ENCODE measurements at regions of chr12 and their contacts with region 1.

Region 1: GRCh38 chr12:124898200-124898922 is 16.1 kb downstream of the UBC start:
- DNase-seq: peak in 9 of 10 donors; percentile 52 to 89 (median 76)
- H3K4me3 ChIP-seq: peak overlapping the region; percentile 7 to 65 (median 40)
- H3K27ac ChIP-seq: peak overlapping the region in 19 of 59 donors; percentile 2 to 75 (median 35)
- H3K27me3 ChIP-seq: no peaks in the 10 kb centered on the region
- CTCF ChIP-seq: peak in 55 of 56 donors; percentile 21 to 86 (median 68)

Region 2: DNA sequence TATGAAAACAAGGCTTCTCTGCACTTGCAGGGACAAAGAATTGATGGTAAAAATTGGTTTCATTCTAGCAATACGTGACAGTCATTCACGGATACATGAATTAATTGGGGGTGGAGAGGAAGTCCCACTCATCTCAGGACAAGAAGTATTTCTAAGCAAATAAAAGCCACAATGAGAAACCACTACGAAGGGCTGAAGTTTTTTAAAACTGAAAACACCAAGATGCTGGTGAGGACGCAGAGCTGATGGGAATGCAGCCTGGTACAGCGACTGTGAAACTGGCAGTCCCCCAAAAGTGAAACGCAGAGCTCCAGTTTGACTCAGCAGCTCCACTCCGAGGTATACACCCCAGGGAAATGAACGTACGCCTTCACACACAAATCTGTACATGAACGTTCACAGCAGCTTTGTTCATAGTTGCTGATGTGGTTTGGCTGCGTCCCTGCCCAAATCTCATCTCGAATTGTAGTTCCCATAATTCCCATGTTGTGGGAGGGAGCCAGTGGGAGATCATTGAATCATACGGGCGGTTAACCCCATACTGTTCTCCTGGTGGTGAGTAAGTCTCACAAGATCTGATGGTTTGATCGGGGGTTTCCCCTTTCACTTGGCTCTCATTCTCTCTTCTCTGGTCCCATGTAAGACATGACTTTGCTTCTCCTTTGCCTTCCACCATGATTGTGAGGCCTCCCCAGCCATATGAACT is 123.7 kb before region 1 on chr12:
- intact Hi-C with region 1: loop called in 1 of 2 experiments (anchors 2 kb)
- DNase-seq: peak in 8 of 10 donors; percentile 62 to 83 (median 72)
- H3K4me3 ChIP-seq: peak overlapping the region in 58 of 59 donors; percentile 4 to 65 (median 42)
- H3K27ac ChIP-seq: peak overlapping the region in 55 of 59 donors; percentile 1 to 81 (median 53)
- H3K27me3 ChIP-seq: no peaks in the 10 kb centered on the region
- CTCF ChIP-seq: peak in 31 of 56 donors; percentile 10 to 53 (median 25)

Region 3: GRCh38 chr12:124847113-124848074 is 51.0 kb before region 1 on chr12:
- intact Hi-C with region 1: loop called in 1 of 2 experiments (anchors 5 kb)
- DNase-seq: peak; percentile 64 to 94 (median 90)
- H3K4me3 ChIP-seq: peak overlapping the region in 34 of 59 donors; percentile 2 to 47 (median 22)
- H3K27ac ChIP-seq: peak overlapping the region; percentile 60 to 97 (median 90)
- H3K27me3 ChIP-seq: no peaks in the 10 kb centered on the region
- CTCF ChIP-seq: peak in 8 of 56 donors; percentile 6 to 24 (median 16)

Region 4: DNA sequence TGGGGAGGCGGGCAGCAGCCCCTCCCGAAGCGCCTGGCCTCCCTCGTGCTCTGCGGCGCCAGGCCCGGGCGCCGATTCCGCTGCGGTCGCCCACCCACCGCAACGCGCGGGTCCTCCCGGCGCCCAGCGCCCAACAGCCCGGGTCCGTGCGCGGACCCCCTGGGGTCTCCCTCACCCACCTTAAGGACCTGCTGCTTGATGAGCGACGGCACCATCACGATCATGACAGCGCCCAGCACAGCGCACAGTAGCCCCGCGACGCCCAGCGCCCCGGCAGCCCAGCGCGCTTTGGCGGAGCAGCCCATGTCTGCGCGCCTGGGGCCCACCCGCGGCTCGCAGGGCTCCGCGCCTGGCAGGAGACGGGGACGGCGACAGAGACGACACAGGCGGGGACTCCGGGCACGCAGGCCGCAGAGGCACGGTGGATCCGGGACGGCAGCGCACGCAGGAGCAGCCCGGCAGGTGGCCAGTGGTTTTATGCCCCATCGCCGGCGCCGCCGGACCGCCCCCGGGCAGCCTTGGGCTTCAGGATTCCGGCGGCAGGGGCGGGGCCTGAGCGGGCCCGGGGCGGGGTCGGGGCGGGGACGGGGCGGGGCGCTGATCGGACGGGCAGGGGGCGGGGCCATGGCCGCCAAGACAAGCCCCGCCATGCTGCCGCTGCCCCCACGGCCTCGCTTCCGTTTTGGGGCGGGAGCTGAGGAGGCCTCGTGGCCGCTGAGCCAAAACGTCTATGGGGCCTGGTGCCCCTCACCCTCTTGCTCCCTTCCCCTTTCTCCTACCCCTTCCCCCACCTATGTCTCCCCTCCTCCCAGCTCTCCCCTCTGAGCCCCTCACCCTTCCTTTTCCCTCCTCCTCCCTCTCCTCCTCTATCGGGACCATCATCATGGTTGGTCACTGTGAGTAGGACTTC is 34.7 kb before region 1 on chr12 and contains the start of gene SCARB1:
- intact Hi-C with region 1: loop called in 1 of 2 experiments (anchors 5 kb)
- DNase-seq: peak; percentile 69 to 89 (median 81)
- H3K4me3 ChIP-seq: peak within 1 kb of the TSS; percentile 60 to 97 (median 90)
- H3K27ac ChIP-seq: peak within 1 kb of the TSS; percentile 29 to 94 (median 84)
- H3K27me3 ChIP-seq: no peaks in the 10 kb centered on the region
- CTCF ChIP-seq: peak in 13 of 56 donors; percentile 6 to 42 (median 21)
- total RNA-seq, gene SCARB1: 33.4 to 110 (median 54.7) TPM

Region 5: GRCh38 chr12:125053821-125054220 is 155.5 kb after region 1 on chr12:
- intact Hi-C with region 1: no loop called
- DNase-seq: no peak
- H3K4me3 ChIP-seq: no peak overlapping the region
- H3K27ac ChIP-seq: no peak overlapping the region
- H3K27me3 ChIP-seq: no peaks in the 10 kb centered on the region
- CTCF ChIP-seq: no peak

Measured in dorsolateral prefrontal cortex (tissue), 120 donors.